ENCODE measurements at regions of chr3 and their contacts with region 1.

Region 1: GRCh38 chr3:117059067-117059955 is 349.7 kb downstream of the TUSC7 start:
- DNase-seq: peak; percentile 6
- ATAC-seq: no peak
- H3K4me3 ChIP-seq: no peak overlapping the region
- H3K27ac ChIP-seq: no peak overlapping the region
- H3K4me1 ChIP-seq: no peaks in the 10 kb centered on the region
- H3K27me3 ChIP-seq: no peaks in the 10 kb centered on the region
- CTCF ChIP-seq: peak; percentile 13 to 54 (median 16); a peak in 4 of 6 replicates
- POLR2A ChIP-seq: no peak
- RAD21 ChIP-seq: peak; percentile 29; the same call in 1 of the 2 replicates

Region 2: GRCh38 chr3:117036259-117036799 is 23.0 kb before region 1 on chr3:
- CTCF ChIA-PET with region 1: no interaction called
- POLR2A ChIA-PET with region 1: no interaction called
- RAD21 ChIA-PET with region 1: no interaction called
- intact Hi-C with region 1: no loop called
- DNase-seq: no peak
- ATAC-seq: no peak
- H3K4me3 ChIP-seq: no peak overlapping the region
- H3K27ac ChIP-seq: no peak overlapping the region
- H3K4me1 ChIP-seq: no peaks in the 10 kb centered on the region
- H3K27me3 ChIP-seq: no peaks in the 10 kb centered on the region
- CTCF ChIP-seq: no peak
- POLR2A ChIP-seq: no peak
- RAD21 ChIP-seq: no peak

Region 3: DNA sequence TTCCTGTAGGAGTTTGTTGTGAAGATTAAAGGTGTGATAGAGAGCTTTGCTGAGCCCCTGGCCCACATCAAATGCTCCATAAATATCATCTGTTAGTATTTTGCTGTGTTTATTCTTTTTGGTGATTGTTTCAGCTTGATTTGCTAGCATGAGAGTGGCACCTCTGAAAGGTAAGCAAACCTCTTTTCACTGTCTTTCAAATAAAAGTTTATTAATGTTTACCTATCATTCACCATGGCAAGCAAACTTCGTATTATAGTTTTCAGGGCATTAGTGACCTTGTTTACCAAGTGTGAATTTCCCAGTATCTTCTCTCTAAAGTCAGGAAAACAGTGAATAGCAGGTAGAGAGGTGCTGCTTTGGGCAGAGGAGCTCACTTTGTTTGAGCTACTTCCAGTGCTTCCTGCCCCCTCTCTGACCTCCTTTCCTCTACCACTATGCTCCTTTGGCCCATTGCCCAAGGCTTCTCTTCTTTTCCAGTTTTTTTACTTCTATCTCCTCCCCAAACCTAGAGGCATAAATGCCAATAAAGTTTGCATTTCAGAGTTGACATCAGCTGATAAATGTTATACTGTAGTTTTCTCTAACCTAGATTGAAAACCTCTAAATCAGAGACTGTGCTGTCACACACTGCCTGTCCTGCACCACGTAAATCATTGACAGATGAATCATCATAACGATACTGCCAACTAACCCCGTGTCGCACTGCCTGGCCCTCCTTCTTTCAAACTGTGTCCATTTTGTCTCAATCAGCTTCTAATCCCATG is 219.3 kb after region 1 on chr3:
- CTCF ChIA-PET with region 1: no interaction called
- POLR2A ChIA-PET with region 1: no interaction called
- RAD21 ChIA-PET with region 1: no interaction called
- intact Hi-C with region 1: no loop called
- DNase-seq: peak; percentile 8
- ATAC-seq: peak; percentile 76
- H3K4me3 ChIP-seq: no peak overlapping the region
- H3K27ac ChIP-seq: no peak overlapping the region
- H3K4me1 ChIP-seq: peaks cover 0 to 6% of the 10 kb centered on the region in 2 experiments; a peak in 1 of 4 replicates
- H3K27me3 ChIP-seq: no peaks in the 10 kb centered on the region
- CTCF ChIP-seq: no peak
- POLR2A ChIP-seq: no peak
- RAD21 ChIP-seq: no peak

Region 4: GRCh38 chr3:117526470-117527079 is 467.3 kb after region 1 on chr3:
- CTCF ChIA-PET with region 1: no interaction called
- POLR2A ChIA-PET with region 1: no interaction called
- RAD21 ChIA-PET with region 1: no interaction called
- intact Hi-C with region 1: loop called (anchors 5 kb)
- DNase-seq: peak; percentile 2
- ATAC-seq: no peak
- H3K4me3 ChIP-seq: no peak overlapping the region
- H3K27ac ChIP-seq: no peak overlapping the region
- H3K4me1 ChIP-seq: no peaks in the 10 kb centered on the region
- H3K27me3 ChIP-seq: no peaks in the 10 kb centered on the region
- CTCF ChIP-seq: peak; percentile 17 to 58 (median 39); a peak in 5 of 6 replicates
- POLR2A ChIP-seq: no peak
- RAD21 ChIP-seq: peak; percentile 28; the same call in 1 of the 2 replicates

Region 5: GRCh38 chr3:118817748-118818165 is 1758.4 kb after region 1 on chr3:
- CTCF ChIA-PET with region 1: no interaction called
- POLR2A ChIA-PET with region 1: no interaction called
- RAD21 ChIA-PET with region 1: no interaction called
- intact Hi-C with region 1: loop called (anchors 5 kb)
- DNase-seq: peak; percentile 56
- ATAC-seq: peak; percentile 93
- H3K4me3 ChIP-seq: no peak overlapping the region
- H3K27ac ChIP-seq: no peak overlapping the region
- H3K4me1 ChIP-seq: no peaks in the 10 kb centered on the region
- H3K27me3 ChIP-seq: no peaks in the 10 kb centered on the region; the same call in 1 of the 2 replicates
- CTCF ChIP-seq: peak; percentile 61 to 90 (median 73); a peak in 5 of 6 replicates
- POLR2A ChIP-seq: no peak
- RAD21 ChIP-seq: peak; percentile 83